WTC11 (cell line): ENCODE measurements at regions of chr2 and their contacts with region 1.

Region 1: GRCh38 chr2:96856776-96857673 is 791 bp downstream of the ANKRD39 start:
- DNase-seq: no peak
- ATAC-seq: peak; percentile 4; the same call in 1 of the 2 replicates
- H3K4me3 Mint-ChIP-seq: peak overlapping the region; percentile 80
- H3K27ac Mint-ChIP-seq: no peak overlapping the region
- H3K4me1 Mint-ChIP-seq: peaks cover 21% of the 10 kb centered on the region
- H3K27me3 Mint-ChIP-seq: no peaks in the 10 kb centered on the region
- CTCF ChIP-seq: no peak

Region 2: GRCh38 chr2:96523659-96524481 is 333.2 kb before region 1 on chr2:
- CTCF ChIA-PET with region 1: no interaction called
- POLR2A ChIA-PET with region 1: no interaction called
- DNase-seq: no peak
- ATAC-seq: no peak
- H3K4me3 Mint-ChIP-seq: no peak overlapping the region
- H3K27ac Mint-ChIP-seq: no peak overlapping the region
- H3K4me1 Mint-ChIP-seq: peaks cover 17% of the 10 kb centered on the region
- H3K27me3 Mint-ChIP-seq: peaks cover 18% of the 10 kb centered on the region
- CTCF ChIP-seq: no peak

Region 3: DNA sequence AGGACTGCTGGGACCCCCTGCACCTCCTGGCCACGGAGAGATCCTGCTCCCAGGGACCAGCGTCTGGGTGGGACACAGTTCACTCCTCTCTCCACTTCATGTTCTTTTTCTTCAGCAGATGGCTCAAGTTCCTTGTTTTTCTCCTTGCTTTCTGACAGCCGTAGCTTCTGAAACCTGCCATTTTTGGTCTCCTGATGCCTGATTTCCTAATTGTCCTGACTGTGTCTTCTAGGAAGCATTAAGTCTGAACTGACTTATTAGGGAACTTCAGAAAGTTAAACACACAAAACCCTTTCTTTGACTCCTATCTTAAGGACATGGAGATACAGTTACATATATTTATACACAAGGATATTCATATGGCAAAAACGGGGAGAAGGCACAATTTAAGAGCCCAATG is 73.6 kb before region 1 on chr2:
- CTCF ChIA-PET with region 1: no interaction called
- POLR2A ChIA-PET with region 1: no interaction called
- DNase-seq: no peak
- ATAC-seq: no peak
- H3K4me3 Mint-ChIP-seq: no peak overlapping the region
- H3K27ac Mint-ChIP-seq: no peak overlapping the region
- H3K4me1 Mint-ChIP-seq: no peaks in the 10 kb centered on the region
- H3K27me3 Mint-ChIP-seq: no peaks in the 10 kb centered on the region
- CTCF ChIP-seq: no peak

Region 4: DNA sequence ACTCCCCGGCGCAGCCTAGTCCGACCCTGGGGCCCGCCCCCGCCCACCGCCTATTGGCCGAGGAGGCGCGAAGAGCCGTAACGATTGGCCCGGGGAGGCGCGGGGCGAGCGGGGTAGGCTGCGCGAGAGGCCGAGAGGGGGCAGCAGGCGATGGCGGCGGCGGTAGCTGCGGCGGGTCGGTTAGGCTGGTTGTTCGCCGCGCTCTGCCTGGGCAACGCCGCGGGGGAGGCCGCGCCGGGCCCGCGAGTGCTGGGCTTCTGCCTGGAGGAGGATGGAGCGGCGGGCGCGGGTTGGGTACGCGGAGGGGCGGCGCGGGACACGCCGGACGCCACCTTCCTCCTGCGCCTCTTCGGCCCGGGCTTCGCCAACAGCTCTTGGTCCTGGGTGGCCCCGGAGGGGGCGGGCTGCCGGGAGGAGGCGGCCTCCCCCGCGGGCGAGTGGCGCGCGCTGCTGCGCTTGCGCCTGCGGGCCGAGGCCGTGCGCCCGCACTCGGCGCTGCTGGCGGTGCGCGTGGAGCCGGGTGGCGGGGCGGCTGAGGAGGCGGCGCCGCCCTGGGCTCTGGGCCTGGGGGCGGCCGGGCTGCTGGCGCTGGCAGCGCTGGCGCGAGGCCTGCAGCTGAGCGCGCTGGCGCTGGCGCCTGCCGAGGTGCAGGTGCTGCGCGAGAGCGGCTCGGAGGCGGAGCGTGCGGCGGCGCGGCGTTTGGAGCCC is 40.7 kb before region 1 on chr2 and contains the start of gene CNNM3:
- CTCF ChIA-PET with region 1: interaction called, 21 read pairs
- POLR2A ChIA-PET with region 1: no interaction called
- DNase-seq: peak; percentile 99
- ATAC-seq: peak; percentile 94
- H3K4me3 Mint-ChIP-seq: peak within 1 kb of the TSS; percentile 83
- H3K27ac Mint-ChIP-seq: peak within 1 kb of the TSS; percentile 59
- H3K4me1 Mint-ChIP-seq: peaks cover 47% of the 10 kb centered on the region
- H3K27me3 Mint-ChIP-seq: 0 out of 2 replicates have a peak, but pooled peaks cover 2% of the 10 kb centered on the region
- CTCF ChIP-seq: peak; percentile 36; the same call in 1 of the 2 replicates
- total RNA-seq, gene CNNM3: 34.9 to 36.6 TPM (median 35.2 TPM) in 3 replicates

Region 5: DNA sequence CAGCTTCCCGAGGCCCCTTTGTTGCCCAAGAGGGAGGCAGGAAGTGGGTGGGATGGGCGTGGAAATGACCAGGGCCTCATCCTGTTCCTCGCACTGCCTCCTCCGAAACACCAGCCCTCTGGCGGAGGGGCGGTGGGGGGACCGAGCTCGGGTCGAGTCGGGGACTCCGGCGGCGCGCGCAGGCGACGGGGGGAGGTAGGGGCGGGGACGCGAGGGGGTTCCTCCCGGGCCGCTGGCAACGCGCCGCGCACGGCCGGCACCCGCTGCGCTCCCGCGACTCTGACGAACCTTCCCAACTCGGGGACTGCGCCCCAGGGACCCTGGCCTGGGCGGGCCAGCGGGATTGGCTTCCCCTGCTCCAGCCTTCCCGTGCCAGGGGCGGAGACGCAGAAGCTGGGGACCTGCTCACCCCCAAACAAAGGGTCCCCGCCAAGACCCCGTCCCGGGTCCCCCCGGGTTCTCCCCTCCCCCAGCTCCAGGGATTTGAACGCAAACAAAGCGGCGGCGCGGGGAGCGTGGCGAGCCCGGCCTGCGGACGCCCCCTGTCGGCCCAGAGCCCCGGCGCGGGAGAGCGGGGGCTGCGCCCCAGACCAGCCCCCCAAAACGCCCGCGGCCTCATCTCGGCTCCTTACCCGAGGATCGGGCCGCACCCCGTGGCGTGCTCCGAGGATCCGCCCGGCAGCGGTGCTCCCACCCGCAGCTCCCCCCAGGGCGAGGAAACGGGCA is 11.7 kb after region 1 on chr2:
- CTCF ChIA-PET with region 1: interaction called, 63 read pairs
- POLR2A ChIA-PET with region 1: interaction called, 20 read pairs
- DNase-seq: peak; percentile 74
- ATAC-seq: peak; percentile 61
- H3K4me3 Mint-ChIP-seq: peak overlapping the region; percentile 82
- H3K27ac Mint-ChIP-seq: no peak overlapping the region
- H3K4me1 Mint-ChIP-seq: peaks cover 37% of the 10 kb centered on the region
- H3K27me3 Mint-ChIP-seq: 0 out of 2 replicates have a peak, but pooled peaks cover 4% of the 10 kb centered on the region
- CTCF ChIP-seq: peak; percentile 45; the same call in 1 of the 2 replicates

Region 6: GRCh38 chr2:96891491-96892333 is 34.7 kb after region 1 on chr2:
- CTCF ChIA-PET with region 1: interaction called, 18 read pairs
- POLR2A ChIA-PET with region 1: interaction called, 5 read pairs
- DNase-seq: no peak
- ATAC-seq: peak; percentile 77
- H3K4me3 Mint-ChIP-seq: no peak overlapping the region
- H3K27ac Mint-ChIP-seq: peak overlapping the region; percentile 40; the same call in 1 of the 2 replicates
- H3K4me1 Mint-ChIP-seq: peaks cover 51% of the 10 kb centered on the region
- H3K27me3 Mint-ChIP-seq: no peaks in the 10 kb centered on the region; the same call in 1 of the 2 replicates
- CTCF ChIP-seq: no peak

Region 7: DNA sequence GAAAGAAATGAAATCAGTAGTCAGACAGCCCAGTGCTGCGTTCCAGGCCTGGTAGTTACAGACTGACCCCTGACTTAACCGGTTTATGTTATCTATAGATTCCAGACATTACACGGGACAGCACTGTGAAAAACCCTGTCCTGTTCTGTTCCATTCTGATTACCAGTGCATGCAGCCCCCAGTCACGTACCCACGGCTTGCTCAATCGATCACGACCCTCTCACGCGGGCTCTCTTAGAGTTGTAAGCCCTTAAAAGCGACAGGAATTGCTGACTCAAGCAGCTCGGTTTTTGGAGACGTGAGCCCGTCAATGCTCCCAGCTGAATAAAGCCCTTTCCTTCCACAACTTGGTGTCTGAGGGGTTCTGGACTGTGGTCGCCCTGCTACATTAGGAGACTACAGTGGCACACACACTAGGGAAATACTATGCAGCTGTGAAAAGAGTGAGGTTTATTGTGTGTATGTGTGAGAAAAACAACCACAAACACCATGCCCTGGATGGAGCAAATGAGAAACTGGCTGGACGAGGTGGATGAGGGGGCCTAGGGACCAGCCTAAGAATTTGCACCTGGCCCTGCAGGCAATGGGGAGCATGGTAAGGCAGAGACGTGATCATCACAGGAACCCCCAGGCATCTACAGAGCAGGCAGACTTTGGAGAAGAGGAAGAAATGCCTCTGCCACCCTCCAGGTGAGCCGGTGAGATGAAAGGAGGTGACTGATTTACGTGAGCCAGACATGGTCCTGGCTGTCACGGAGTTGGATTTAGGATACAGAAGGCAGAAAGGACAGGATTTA is 61.9 kb after region 1 on chr2:
- CTCF ChIA-PET with region 1: interaction called, 23 read pairs
- POLR2A ChIA-PET with region 1: no interaction called
- DNase-seq: no peak
- ATAC-seq: no peak
- H3K4me3 Mint-ChIP-seq: no peak overlapping the region
- H3K27ac Mint-ChIP-seq: no peak overlapping the region
- H3K4me1 Mint-ChIP-seq: peaks cover 52% of the 10 kb centered on the region
- H3K27me3 Mint-ChIP-seq: peaks cover 71% of the 10 kb centered on the region
- CTCF ChIP-seq: no peak

Region 8: DNA sequence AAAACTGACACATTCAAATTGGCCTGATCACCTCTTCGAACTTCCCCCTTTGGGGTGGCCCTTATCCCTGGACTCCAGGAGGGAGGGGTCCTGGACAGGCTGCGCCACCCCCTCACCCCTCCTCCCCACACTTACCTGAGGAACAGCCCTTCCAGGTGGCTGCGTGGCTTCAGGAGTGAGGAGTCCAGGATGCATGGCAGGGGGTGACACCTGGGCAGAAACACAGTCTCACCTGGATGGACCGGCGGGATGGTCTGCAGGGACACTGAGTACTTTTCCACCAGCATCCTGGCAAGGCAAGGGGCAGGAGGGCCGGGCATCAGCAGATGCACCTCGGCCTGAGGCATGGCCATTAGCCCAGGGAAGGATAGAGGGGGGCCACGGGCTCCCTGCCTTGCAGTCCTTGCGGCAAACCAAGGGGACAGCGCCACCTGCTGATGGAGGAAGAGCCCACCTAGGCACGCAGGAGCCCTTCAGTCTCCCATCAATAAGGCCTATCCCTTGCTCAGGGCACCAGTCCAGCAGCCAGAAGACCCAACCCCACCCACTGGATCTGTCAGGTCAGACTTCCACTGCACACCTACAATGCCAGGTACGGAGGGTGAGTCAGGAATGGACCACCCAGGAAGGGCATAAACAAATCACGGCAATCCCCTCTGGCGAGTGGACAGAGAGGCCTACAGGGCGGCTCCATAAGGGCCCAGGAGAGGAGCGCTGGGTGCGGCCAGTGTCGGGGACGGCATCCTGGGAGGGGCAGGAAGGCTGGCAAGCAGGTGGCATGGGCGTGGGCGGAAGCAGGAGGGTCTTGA is 103.3 kb after region 1 on chr2:
- CTCF ChIA-PET with region 1: interaction called, 252 read pairs
- POLR2A ChIA-PET with region 1: interaction called, 9 read pairs
- DNase-seq: peak; percentile 95
- ATAC-seq: peak; percentile 92
- H3K4me3 Mint-ChIP-seq: no peak overlapping the region
- H3K27ac Mint-ChIP-seq: no peak overlapping the region
- H3K4me1 Mint-ChIP-seq: peaks cover 14% of the 10 kb centered on the region
- H3K27me3 Mint-ChIP-seq: no peaks in the 10 kb centered on the region
- CTCF ChIP-seq: peak; percentile 93